Panc1 (cell line): ENCODE measurements at regions of chr1 and their contacts with region 1.

Region 1: GRCh38 chr1:189673218-189673617 is 804.4 kb downstream of the BRINP3 start:
- DNase-seq: no peak
- ATAC-seq: no peak
- H3K4me3 ChIP-seq: no peak overlapping the region
- H3K27ac ChIP-seq: no peak overlapping the region
- H3K4me1 ChIP-seq: no peaks in the 10 kb centered on the region
- H3K27me3 ChIP-seq: no peaks in the 10 kb centered on the region
- CTCF ChIP-seq: no peak

Region 2: DNA sequence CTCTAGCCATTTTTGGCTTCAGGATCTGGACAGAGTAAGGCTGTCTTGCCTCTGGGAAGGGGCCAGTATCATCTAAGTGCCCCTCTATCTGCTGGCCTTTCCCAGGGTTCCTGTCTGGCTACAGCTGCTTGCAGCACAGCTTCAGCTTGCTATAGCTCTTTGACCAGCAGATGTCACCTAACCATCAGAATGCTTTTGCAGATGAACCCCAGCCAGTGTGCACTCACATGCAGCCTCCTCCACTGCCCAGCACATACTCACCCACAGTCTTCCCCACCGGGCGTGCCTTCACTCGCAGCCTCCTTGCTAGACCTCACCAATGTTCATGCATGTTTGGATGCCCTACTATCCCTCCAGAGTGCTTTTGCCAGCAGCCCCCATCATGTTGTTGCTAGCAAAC is 35.5 kb after region 1 on chr1:
- CTCF ChIA-PET with region 1: no interaction called
- POLR2A ChIA-PET with region 1: no interaction called
- in situ Hi-C with region 1: no loop called
- intact Hi-C with region 1: no loop called
- DNase-seq: no peak
- ATAC-seq: no peak
- H3K4me3 ChIP-seq: no peak overlapping the region
- H3K27ac ChIP-seq: no peak overlapping the region
- H3K4me1 ChIP-seq: no peaks in the 10 kb centered on the region
- H3K27me3 ChIP-seq: no peaks in the 10 kb centered on the region
- CTCF ChIP-seq: 0 out of 2 replicates have a peak, but pooled peaks have one; percentile 10

Region 3: DNA sequence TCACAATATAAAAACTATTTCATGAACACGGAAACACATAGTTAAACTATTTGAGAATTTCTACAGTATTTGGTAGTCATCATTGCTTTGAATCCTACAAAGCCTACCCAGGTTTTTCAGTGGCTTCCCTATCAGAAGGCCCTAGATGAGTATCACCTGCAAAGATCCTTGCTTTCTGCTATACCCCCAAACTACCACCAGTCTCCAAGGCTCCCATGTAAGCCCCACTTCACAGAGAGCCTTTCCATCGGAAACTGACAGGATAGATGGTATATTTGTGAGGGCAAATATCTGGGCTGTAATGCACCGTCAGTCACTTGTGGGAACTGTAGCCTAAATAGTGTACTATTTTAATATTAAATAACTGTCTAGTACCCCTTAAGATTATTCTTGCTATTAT is 130.1 kb after region 1 on chr1:
- CTCF ChIA-PET with region 1: no interaction called
- POLR2A ChIA-PET with region 1: interaction called, 12 read pairs
- in situ Hi-C with region 1: no loop called
- intact Hi-C with region 1: no loop called
- DNase-seq: no peak
- ATAC-seq: no peak
- H3K4me3 ChIP-seq: no peak overlapping the region
- H3K27ac ChIP-seq: no peak overlapping the region
- H3K4me1 ChIP-seq: no peaks in the 10 kb centered on the region
- H3K27me3 ChIP-seq: no peaks in the 10 kb centered on the region
- CTCF ChIP-seq: no peak